Activated T-helper 1 cell treated with anti-CD3 and anti-CD28 coated beads, Interleukin-12 subunit alpha, Interleukin-12 subunit beta, Interleukin-2, Interleukin-4 antibody, amounts not matched to agents 30 ng/mL and 10 ng/mL and 1 ng/mL, durations not matched to agents 14 hours and 24 hours and 36 hours (primary cell): ENCODE measurements at regions of chr5 and their contacts with region 1.

Region 1: GRCh38 chr5:137498736-137499505 is at the start of gene SPOCK1:
- DNase-seq: peak; percentile 36
- H3K4me3 Mint-ChIP-seq: no peak within 1 kb of the TSS
- H3K27ac Mint-ChIP-seq: no peak within 1 kb of the TSS
- H3K4me1 Mint-ChIP-seq: no peaks in the 10 kb centered on the region
- H3K27me3 Mint-ChIP-seq: peaks cover 34% of the 10 kb centered on the region
- total RNA-seq, gene SPOCK1: not detected in 2 replicates

Region 2: GRCh38 chr5:137320056-137321045 is 178.6 kb before region 1 on chr5:
- intact Hi-C with region 1: loop called (anchors 1 kb)
- DNase-seq: no peak
- H3K4me3 Mint-ChIP-seq: no peak overlapping the region
- H3K27ac Mint-ChIP-seq: no peak overlapping the region
- H3K4me1 Mint-ChIP-seq: no peaks in the 10 kb centered on the region
- H3K27me3 Mint-ChIP-seq: peaks cover 9% of the 10 kb centered on the region

Region 3: GRCh38 chr5:137344723-137345322 is 154.1 kb before region 1 on chr5:
- intact Hi-C with region 1: loop called (anchors 1 kb)
- DNase-seq: no peak
- H3K4me3 Mint-ChIP-seq: no peak overlapping the region
- H3K27ac Mint-ChIP-seq: no peak overlapping the region
- H3K4me1 Mint-ChIP-seq: no peaks in the 10 kb centered on the region
- H3K27me3 Mint-ChIP-seq: peaks cover 2% of the 10 kb centered on the region